ENCODE measurements at regions of chr1 and their contacts with region 1.

Region 1: DNA sequence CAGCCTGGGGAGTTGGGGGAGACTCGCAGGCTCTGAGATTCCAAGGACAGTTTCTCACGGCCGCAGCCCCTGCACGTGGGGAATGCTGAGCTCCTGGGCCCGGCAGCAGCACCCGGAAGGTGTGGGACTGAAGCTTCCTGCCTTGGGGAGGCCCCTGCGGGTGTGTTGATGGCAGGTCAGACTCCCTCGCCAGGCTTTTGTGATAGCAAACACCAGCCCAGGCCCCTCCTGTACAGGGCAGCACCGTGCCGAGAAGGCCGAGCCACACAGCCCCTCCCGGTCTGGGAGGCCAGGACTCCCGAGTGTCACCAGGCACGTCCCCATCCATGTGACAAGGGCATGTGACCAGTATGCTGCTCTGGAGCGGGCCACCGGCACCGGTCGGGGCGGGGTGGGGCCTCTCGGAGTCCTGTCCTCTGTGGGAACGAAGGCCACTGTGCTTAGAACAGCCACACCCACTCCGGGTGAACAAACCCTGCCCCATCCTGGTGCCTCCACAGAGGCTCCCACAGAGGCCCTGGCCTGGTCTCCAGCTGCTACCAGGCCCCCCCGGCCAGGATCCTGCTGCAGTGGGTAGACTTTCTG is 31.1 kb upstream of the ARHGEF16 start:
- DNase-seq: no peak
- ATAC-seq: no peak
- H3K4me3 ChIP-seq: no peak overlapping the region
- H3K4me3 Mint-ChIP-seq: no peak overlapping the region
- H3K27ac ChIP-seq: no peak overlapping the region
- H3K27ac Mint-ChIP-seq: no peak overlapping the region
- H3K4me1 ChIP-seq: no peaks in the 10 kb centered on the region
- H3K4me1 Mint-ChIP-seq: no peaks in the 10 kb centered on the region
- H3K27me3 ChIP-seq: no peaks in the 10 kb centered on the region
- H3K27me3 Mint-ChIP-seq: no peaks in the 10 kb centered on the region
- CTCF ChIP-seq: no peak

Region 2: GRCh38 chr1:1943834-1944570 is 1479.3 kb before region 1 on chr1:
- CTCF ChIA-PET with region 1: no interaction called
- POLR2A ChIA-PET with region 1: no interaction called
- intact Hi-C with region 1: loop called in 1 of 2 experiments (anchors 5 kb)
- DNase-seq: peak; percentile 38 to 75 (median 58)
- ATAC-seq: peak; percentile 99
- H3K4me3 ChIP-seq: no peak overlapping the region
- H3K4me3 Mint-ChIP-seq: no peak overlapping the region
- H3K27ac ChIP-seq: no peak overlapping the region
- H3K27ac Mint-ChIP-seq: no peak overlapping the region
- H3K4me1 ChIP-seq: peaks cover 5% of the 10 kb centered on the region
- H3K4me1 Mint-ChIP-seq: peaks cover 3% of the 10 kb centered on the region
- H3K27me3 ChIP-seq: no peaks in the 10 kb centered on the region
- H3K27me3 Mint-ChIP-seq: no peaks in the 10 kb centered on the region
- CTCF ChIP-seq: peak; percentile 83

Region 3: GRCh38 chr1:2821966-2822620 is 601.2 kb before region 1 on chr1:
- CTCF ChIA-PET with region 1: no interaction called
- POLR2A ChIA-PET with region 1: no interaction called
- intact Hi-C with region 1: loop called in 1 of 2 experiments (anchors 10 kb)
- DNase-seq: peak in 8 of 9 experiments; percentile 26 to 72 (median 56)
- ATAC-seq: peak; percentile 69
- H3K4me3 ChIP-seq: no peak overlapping the region
- H3K4me3 Mint-ChIP-seq: no peak overlapping the region
- H3K27ac ChIP-seq: no peak overlapping the region
- H3K27ac Mint-ChIP-seq: no peak overlapping the region
- H3K4me1 ChIP-seq: peaks cover 8% of the 10 kb centered on the region
- H3K4me1 Mint-ChIP-seq: peaks cover 2% of the 10 kb centered on the region
- H3K27me3 ChIP-seq: peaks cover 0 to 2% of the 10 kb centered on the region in 2 experiments
- H3K27me3 Mint-ChIP-seq: peaks cover 11% of the 10 kb centered on the region
- CTCF ChIP-seq: peak; percentile 57